ENCODE measurements at regions of chr2 and their contacts with region 1.

Region 1: GRCh38 chr2:38274286-38275276 is 102.5 kb downstream of the ATL2 start:
- DNase-seq: peak; percentile 13 to 29
- H3K4me3 ChIP-seq: no peak overlapping the region
- H3K27ac ChIP-seq: no peak overlapping the region
- H3K4me1 ChIP-seq: peaks cover 0 to 3% of the 10 kb centered on the region in 2 donors
- H3K27me3 ChIP-seq: no peaks in the 10 kb centered on the region
- CTCF ChIP-seq: peak in 5 of 6 experiments; percentile 24 to 90 (median 75)
- POLR2A ChIP-seq: no peak

Region 2: DNA sequence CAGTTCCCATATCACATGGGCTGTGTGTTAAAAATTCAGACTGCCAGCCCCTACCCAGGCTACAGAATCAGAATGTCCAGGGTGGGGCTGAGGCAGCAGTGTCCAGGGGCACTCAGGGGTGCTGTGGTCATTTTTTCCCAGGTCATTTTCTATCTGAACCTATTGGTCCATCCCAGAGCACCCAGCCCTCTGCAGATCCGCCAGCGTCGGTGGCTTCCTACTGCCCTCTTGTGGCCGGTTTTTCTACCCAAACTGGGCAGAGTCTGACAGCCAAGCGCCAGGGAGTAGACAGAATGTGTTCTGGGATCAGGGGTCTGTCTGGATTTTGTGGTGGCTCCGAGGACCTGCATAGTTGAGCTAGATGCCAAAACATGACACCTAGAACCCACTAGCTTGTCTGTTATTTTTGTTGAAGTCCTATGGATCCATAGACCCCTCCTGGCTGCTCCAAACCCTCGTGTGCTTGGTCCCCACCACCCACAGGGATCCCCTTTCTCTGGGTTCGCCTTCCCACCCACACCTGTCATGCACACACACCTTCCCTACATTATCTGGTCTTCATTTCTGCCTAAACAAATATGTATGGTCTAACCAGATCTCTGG is 383.6 kb before region 1 on chr2:
- intact Hi-C with region 1: loop called (anchors 10 kb)
- DNase-seq: peak; percentile 60 to 69
- H3K4me3 ChIP-seq: no peak overlapping the region
- H3K27ac ChIP-seq: no peak overlapping the region
- H3K4me1 ChIP-seq: no peaks in the 10 kb centered on the region
- H3K27me3 ChIP-seq: no peaks in the 10 kb centered on the region
- CTCF ChIP-seq: peak; percentile 41 to 86 (median 53)
- POLR2A ChIP-seq: no peak

Region 3: DNA sequence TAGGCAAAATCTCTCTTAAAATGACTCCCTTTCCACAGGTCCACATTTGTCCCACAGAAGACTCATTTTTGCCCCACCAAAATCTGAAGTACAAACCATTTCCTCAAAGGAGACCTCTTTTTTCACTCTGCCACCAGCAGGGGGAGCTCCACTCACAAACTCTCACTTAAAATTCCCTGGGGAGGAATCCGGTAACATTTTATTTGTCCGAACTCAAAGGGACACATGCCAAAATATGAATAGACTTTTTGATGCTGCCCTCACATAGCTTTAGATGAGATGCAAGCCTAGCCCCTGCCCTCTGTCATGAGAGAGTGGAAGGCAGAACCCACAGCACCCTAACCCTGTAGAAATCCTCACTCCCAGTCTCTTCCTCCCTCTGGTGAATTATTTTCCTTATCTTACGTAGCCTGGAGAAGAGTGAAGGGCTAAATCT is 292.4 kb before region 1 on chr2:
- intact Hi-C with region 1: loop called (anchors 5 kb)
- DNase-seq: peak; percentile 66 to 78
- H3K4me3 ChIP-seq: no peak overlapping the region
- H3K27ac ChIP-seq: no peak overlapping the region
- H3K4me1 ChIP-seq: no peaks in the 10 kb centered on the region
- H3K27me3 ChIP-seq: no peaks in the 10 kb centered on the region
- CTCF ChIP-seq: peak; percentile 54 to 82 (median 74)
- POLR2A ChIP-seq: no peak

Measured in thyroid gland (tissue), 4 donors.